Endothelial cell of umbilical vein (primary cell): ENCODE measurements at regions of chr7 and their contacts with region 1.

Region 1: DNA sequence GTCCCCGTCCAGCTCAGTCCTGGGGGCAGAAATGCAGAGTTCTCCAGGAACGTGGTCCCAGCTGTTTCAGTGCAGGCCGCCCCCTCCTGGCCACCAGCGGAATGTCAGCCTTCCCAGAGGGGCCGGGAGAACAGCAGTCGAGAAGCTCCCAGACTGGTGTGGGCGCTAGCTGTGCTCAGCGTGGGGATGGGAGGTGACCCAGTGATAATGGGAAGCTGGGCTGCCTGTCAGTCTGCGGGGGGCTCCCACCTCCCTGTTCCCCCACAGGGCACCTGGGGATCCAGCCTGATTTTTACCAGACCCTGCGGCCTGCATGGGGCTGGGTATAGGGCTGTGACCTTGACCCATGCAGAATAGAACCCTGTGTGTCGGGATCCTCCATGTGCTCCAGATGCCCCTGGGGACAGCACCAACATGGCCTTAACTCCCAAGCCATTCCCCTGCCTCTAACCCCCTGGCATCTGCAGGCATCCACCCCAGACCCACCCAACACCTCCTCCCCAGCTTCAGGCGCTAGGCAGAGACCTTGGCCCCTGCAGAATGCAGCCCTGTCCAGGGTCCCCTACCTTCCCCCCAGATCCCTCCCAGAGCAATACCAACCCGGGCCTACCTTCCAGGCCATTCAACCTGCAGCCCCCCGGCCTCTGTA is 946 bp upstream of the ELN start:
- DNase-seq: peak; percentile 72
- H3K4me3 ChIP-seq: no peak overlapping the region
- H3K27ac ChIP-seq: no peak overlapping the region
- H3K4me1 ChIP-seq: peaks cover 19% of the 10 kb centered on the region
- H3K27me3 ChIP-seq: peaks cover 11 to 17% of the 10 kb centered on the region in 2 experiments
- CTCF ChIP-seq: peak; percentile 91 to 95
- POLR2A ChIP-seq: no peak

Region 2: GRCh38 chr7:73865738-73866445 is 161.1 kb before region 1 on chr7:
- CTCF ChIA-PET with region 1: interaction called, 105 read pairs
- POLR2A ChIA-PET with region 1: no interaction called
- dilution Hi-C with region 1: no loop called
- intact Hi-C with region 1: loop called (anchors 1 kb)
- DNase-seq: peak; percentile 62
- H3K4me3 ChIP-seq: no peak overlapping the region
- H3K27ac ChIP-seq: no peak overlapping the region
- H3K4me1 ChIP-seq: no peaks in the 10 kb centered on the region
- H3K27me3 ChIP-seq: no peaks in the 10 kb centered on the region
- CTCF ChIP-seq: peak; percentile 61 to 77
- POLR2A ChIP-seq: no peak

Region 3: GRCh38 chr7:73894733-73895551 is 132.1 kb before region 1 on chr7:
- CTCF ChIA-PET with region 1: interaction called, 20 read pairs
- POLR2A ChIA-PET with region 1: interaction called, 4 read pairs
- dilution Hi-C with region 1: no loop called
- intact Hi-C with region 1: no loop called
- DNase-seq: no peak
- H3K4me3 ChIP-seq: no peak overlapping the region
- H3K27ac ChIP-seq: no peak overlapping the region
- H3K4me1 ChIP-seq: no peaks in the 10 kb centered on the region
- H3K27me3 ChIP-seq: no peaks in the 10 kb centered on the region
- CTCF ChIP-seq: no peak
- POLR2A ChIP-seq: no peak

Region 4: GRCh38 chr7:73971704-73972341 is 55.2 kb before region 1 on chr7:
- CTCF ChIA-PET with region 1: interaction called, 21 read pairs
- POLR2A ChIA-PET with region 1: no interaction called
- dilution Hi-C with region 1: no loop called
- intact Hi-C with region 1: no loop called
- DNase-seq: no peak
- H3K4me3 ChIP-seq: no peak overlapping the region
- H3K27ac ChIP-seq: no peak overlapping the region
- H3K4me1 ChIP-seq: no peaks in the 10 kb centered on the region
- H3K27me3 ChIP-seq: no peaks in the 10 kb centered on the region
- CTCF ChIP-seq: peak in 1 of 2 donors; percentile 4
- POLR2A ChIP-seq: no peak

Region 5: GRCh38 chr7:74002474-74003017 is 24.5 kb before region 1 on chr7:
- CTCF ChIA-PET with region 1: interaction called, 37 read pairs
- POLR2A ChIA-PET with region 1: no interaction called
- dilution Hi-C with region 1: no loop called
- intact Hi-C with region 1: loop called (anchors 1 kb)
- DNase-seq: peak; percentile 80
- H3K4me3 ChIP-seq: no peak overlapping the region
- H3K27ac ChIP-seq: peak overlapping the region; percentile 87
- H3K4me1 ChIP-seq: peaks cover 31% of the 10 kb centered on the region
- H3K27me3 ChIP-seq: no peaks in the 10 kb centered on the region
- CTCF ChIP-seq: no peak
- POLR2A ChIP-seq: no peak

Region 6: DNA sequence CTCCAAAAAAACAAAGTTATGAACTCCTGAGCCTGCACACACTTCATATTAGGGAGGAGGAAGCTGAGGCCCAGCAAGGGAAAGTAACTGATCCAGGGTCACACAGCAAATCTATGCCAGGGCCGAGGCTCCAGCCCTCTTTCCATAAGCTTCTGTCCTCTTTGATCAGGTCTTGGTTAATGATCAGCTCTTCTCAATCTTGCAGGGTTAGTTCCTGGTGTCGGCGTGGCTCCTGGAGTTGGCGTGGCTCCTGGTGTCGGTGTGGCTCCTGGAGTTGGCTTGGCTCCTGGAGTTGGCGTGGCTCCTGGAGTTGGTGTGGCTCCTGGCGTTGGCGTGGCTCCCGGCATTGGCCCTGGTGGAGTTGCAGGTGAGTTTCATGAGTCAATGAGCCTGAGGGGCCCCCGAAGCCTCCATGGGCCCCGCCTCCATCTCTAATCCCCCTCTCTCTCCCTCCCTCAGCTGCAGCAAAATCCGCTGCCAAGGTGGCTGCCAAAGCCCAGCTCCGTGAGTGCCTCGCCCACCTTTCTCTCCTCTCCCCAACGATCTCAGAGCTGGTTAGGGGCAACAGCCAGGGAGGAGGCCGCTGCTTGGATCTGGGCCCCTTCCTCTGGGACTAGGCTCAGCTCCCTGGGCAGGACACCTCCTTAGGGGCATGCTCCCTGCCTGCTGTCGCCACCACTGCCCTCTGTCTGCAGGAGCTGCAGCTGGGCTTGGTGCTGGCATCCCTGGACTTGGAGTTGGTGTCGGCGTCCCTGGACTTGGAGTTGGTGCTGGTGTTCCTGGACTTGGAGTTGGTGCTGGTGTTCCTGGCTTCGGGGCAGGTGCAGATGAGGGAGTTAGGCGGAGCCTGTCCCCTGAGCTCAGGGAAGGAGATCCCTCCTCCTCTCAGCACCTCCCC is 32.9 kb after region 1 on chr7:
- CTCF ChIA-PET with region 1: interaction called, 10 read pairs
- POLR2A ChIA-PET with region 1: no interaction called
- dilution Hi-C with region 1: no loop called
- intact Hi-C with region 1: no loop called
- DNase-seq: no peak
- H3K4me3 ChIP-seq: no peak overlapping the region
- H3K27ac ChIP-seq: no peak overlapping the region
- H3K4me1 ChIP-seq: peaks cover 4% of the 10 kb centered on the region
- H3K27me3 ChIP-seq: peaks cover 0 to 3% of the 10 kb centered on the region in 2 experiments
- CTCF ChIP-seq: no peak
- POLR2A ChIP-seq: no peak